ENCODE measurements at regions of chr2 and their contacts with region 1.

Region 1: DNA sequence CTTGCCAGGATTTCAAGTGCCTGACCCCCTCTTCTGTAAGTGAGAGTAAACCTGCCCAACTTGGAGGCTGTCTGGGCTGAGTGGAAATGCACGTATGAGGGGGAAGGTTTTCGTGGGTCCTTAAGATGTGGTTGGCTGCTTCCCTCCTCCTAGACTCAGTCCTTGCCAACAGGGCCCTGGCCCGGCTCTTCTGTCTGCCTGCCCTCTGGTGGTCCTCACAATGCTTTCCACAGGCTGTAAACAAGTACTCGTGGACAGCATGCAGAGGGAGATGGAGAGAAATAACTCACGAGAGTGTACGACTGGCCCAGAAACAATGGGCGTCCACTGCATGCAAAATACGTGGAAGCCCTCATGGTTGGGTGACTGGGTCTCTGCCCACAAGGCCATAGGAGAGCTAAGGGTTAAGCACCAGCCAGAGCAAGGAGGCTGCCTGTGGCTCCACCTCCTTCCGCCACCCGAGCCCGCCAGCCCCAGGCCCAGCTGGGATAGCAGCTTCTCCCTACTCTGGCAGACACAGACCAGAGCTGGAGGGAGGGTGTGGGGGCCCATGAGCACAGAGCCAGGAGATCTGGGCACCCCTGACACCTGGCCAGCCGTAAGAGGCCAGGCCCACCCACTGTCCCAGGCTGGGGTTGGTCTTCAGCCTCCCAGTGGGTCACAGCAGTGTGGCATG is 17.0 kb upstream of the ARHGEF4 start:
- DNase-seq: no peak
- ATAC-seq: peak in 7 of 8 donors; percentile 35 to 81 (median 58)
- H3K4me3 ChIP-seq: peak overlapping the region in 1 of 10 donors; percentile 10
- H3K27ac ChIP-seq: peak overlapping the region in 6 of 10 donors; percentile 8 to 69 (median 40)
- H3K4me1 ChIP-seq: peaks cover 0 to 10% (median 4%) of the 10 kb centered on the region in 9 donors
- H3K27me3 ChIP-seq: peaks cover 0 to 23% (median 7%) of the 10 kb centered on the region in 7 donors
- CTCF ChIP-seq: no peak

Region 2: DNA sequence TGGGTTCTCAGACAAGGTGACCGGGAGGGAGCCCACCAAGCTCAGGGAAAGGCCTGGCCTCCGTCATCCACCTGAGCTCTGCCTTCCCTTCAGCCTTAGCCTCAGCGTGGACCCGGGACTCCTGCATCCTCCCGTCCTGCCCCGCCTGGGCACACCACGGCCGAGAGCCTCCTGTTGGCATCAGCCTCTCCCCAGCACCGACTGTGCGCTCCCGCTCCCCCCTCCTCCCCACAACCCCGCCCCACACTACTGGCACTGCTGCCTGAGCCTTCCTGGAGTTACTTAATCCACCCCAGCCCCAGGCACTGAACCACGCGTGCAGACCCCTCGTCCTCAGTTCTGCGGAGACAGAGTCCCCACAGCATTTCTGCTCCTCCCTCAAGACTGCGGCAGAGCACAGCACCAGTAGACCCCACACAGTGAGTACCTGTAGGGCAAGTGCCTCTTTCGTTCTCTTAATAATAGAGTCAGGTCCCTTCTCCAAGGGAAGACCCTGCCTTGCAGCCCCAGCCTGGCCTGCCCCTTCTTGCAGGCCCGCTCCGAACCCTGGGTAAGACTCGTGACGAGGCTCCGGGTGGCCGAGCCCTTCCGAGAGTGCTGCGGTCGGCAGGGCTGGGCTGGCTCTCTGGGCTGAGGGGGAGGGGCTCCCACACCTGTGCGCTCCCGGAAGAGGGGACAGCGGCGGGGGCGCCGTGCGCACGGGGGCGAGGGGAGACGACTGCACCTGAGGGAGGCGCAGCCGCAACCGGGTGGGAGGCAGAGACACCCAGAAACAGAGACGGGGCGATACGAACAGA is 64.3 kb before region 1 on chr2 and contains the start of gene AMER3:
- intact Hi-C with region 1: no loop called
- DNase-seq: no peak
- ATAC-seq: no peak
- H3K4me3 ChIP-seq: peak within 1 kb of the TSS in 6 of 10 donors; percentile 16 to 43 (median 30)
- H3K27ac ChIP-seq: no peak within 1 kb of the TSS
- H3K4me1 ChIP-seq: peaks cover 0 to 9% (median 0%) of the 10 kb centered on the region in 9 donors
- H3K27me3 ChIP-seq: peaks cover 3 to 77% (median 70%) of the 10 kb centered on the region in 7 donors
- CTCF ChIP-seq: no peak
- total RNA-seq, gene AMER3: not detected

Region 3: GRCh38 chr2:130864830-130865800 is 45.4 kb after region 1 on chr2:
- intact Hi-C with region 1: loop called in 1 of 10 experiments (anchors 5 kb)
- DNase-seq: peak in 1 of 2 donors; percentile 27
- ATAC-seq: peak in 7 of 8 donors; percentile 34 to 99 (median 79)
- H3K4me3 ChIP-seq: no peak overlapping the region
- H3K27ac ChIP-seq: peak overlapping the region in 2 of 10 donors; percentile 10 to 48
- H3K4me1 ChIP-seq: peaks cover 0 to 4% (median 0%) of the 10 kb centered on the region in 9 donors
- H3K27me3 ChIP-seq: peaks cover 0 to 17% (median 6%) of the 10 kb centered on the region in 7 donors
- CTCF ChIP-seq: no peak

Measured in heart right ventricle (tissue), 16 donors.